ENCODE measurements at regions of chr1 and their contacts with region 1.

Region 1: DNA sequence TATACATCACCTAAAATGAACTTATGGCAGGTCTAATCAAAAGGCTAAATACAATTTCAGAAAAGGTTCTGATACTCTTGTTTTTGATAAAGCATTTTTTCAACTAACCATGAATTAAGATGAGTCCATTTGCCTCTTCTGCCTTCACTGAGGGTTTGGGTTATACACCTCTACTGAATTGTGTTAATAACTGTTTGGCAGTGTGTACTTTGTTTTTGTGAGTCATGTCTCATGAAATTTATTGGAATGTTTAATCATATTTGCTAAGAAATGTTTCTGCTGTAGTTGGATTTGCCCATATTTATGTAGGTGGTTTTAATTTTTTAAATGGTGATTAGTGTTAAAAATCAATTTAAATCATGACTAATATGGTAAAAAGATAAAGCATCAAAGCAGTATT is 190.5 kb downstream of the HS2ST1 start:
- DNase-seq: no peak
- ATAC-seq: no peak

Region 2: GRCh38 chr1:87084244-87084836 is 20.6 kb before region 1 on chr1:
- intact Hi-C with region 1: loop called (anchors 1 kb)
- DNase-seq: no peak
- ATAC-seq: peak; percentile 67